CD4-positive, alpha-beta T cell (primary cell): ENCODE measurements at regions of chr11 and their contacts with region 1.

Region 1: GRCh38 chr11:14578541-14578956 is 58.4 kb upstream of the PSMA1 start:
- DNase-seq: peak; percentile 34 to 97 (median 62)
- ATAC-seq: peak; percentile 93
- H3K4me3 ChIP-seq: no peak overlapping the region
- H3K4me3 Mint-ChIP-seq: peak overlapping the region; percentile 23
- H3K27ac ChIP-seq: peak overlapping the region; percentile 77 to 79
- H3K27ac Mint-ChIP-seq: peak overlapping the region; percentile 85
- H3K4me1 ChIP-seq: peaks cover 38% of the 10 kb centered on the region
- H3K4me1 Mint-ChIP-seq: peaks cover 68% of the 10 kb centered on the region
- H3K27me3 ChIP-seq: no peaks in the 10 kb centered on the region
- H3K27me3 Mint-ChIP-seq: no peaks in the 10 kb centered on the region
- CTCF ChIP-seq: no peak

Region 2: DNA sequence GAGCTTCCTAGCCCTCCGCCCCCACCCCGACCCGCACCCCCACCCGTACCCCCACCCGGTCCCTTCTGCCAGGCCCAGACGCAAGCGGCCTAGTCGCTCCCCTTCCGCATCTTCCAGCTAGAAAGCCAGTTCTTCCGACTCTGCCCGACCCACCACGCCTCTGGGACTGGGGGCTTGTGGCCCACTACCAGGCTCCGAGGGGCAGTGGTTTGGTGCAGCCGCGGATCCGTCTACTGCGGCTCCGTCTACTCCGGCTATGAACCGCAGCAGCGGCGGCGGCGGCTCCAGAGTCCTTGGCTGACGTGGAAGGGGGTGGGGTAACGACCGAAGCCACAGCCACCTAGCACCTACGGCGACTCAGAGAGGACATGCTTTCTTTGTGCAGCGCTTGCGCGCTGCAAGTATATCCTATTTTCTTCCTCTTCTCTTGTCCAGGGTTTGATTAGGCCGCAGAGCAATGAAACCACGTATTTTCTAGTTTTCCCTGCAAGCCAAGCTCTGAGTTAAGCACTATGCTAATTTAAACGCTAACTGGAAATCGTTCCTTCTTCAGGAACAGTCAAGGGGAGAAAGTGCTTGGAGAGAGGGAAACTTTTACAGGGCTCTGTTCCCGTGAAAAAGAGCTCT is 78.9 kb before region 1 on chr11 and contains the start of gene COPB1:
- CTCF ChIA-PET with region 1: no interaction called
- POLR2A ChIA-PET with region 1: interaction called, 10 read pairs
- intact Hi-C with region 1: no loop called
- DNase-seq: peak; percentile 84 to 96 (median 90)
- ATAC-seq: peak; percentile 94
- H3K4me3 ChIP-seq: peak within 1 kb of the TSS; percentile 85
- H3K4me3 Mint-ChIP-seq: peak within 1 kb of the TSS; percentile 97
- H3K27ac ChIP-seq: peak within 1 kb of the TSS; percentile 67 to 84
- H3K27ac Mint-ChIP-seq: peak within 1 kb of the TSS; percentile 92
- H3K4me1 ChIP-seq: peaks cover 6% of the 10 kb centered on the region
- H3K4me1 Mint-ChIP-seq: peaks cover 53% of the 10 kb centered on the region
- H3K27me3 ChIP-seq: no peaks in the 10 kb centered on the region
- H3K27me3 Mint-ChIP-seq: no peaks in the 10 kb centered on the region
- CTCF ChIP-seq: no peak
- total RNA-seq, gene COPB1: 93.1 to 95.9 TPM

Region 3: DNA sequence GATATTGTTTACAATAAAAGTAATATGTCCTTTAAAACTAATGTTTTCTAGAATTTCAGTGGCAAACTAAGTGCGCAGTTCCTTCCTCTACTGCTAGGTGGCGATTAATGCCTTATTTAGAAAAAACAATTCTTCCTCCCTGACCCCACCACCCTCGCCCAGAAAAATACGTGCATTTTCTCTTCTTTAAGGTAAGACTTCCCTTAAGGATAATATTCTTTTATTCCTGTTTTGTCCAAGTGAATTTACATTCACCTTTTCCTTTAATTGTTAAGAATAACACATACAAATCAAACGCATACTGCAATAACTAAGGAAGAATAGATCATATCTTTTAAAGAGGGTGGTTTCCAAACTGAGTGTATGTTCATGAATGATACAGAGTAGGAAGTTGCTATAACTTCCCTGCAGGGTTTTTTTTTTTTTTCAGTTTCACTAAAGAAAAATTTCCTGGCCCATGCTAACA is 41.4 kb before region 1 on chr11:
- CTCF ChIA-PET with region 1: interaction called, 3 read pairs
- POLR2A ChIA-PET with region 1: interaction called, 10 read pairs
- intact Hi-C with region 1: loop called in 1 of 2 experiments (anchors 1 kb)
- DNase-seq: peak in 13 of 14 experiments; percentile 11 to 75 (median 37)
- ATAC-seq: peak; percentile 94
- H3K4me3 ChIP-seq: peak overlapping the region; percentile 7
- H3K4me3 Mint-ChIP-seq: peak overlapping the region; percentile 63
- H3K27ac ChIP-seq: no peak overlapping the region
- H3K27ac Mint-ChIP-seq: peak overlapping the region; percentile 63
- H3K4me1 ChIP-seq: peaks cover 7% of the 10 kb centered on the region
- H3K4me1 Mint-ChIP-seq: peaks cover 39% of the 10 kb centered on the region
- H3K27me3 ChIP-seq: no peaks in the 10 kb centered on the region
- H3K27me3 Mint-ChIP-seq: no peaks in the 10 kb centered on the region
- CTCF ChIP-seq: peak; percentile 96

Region 4: DNA sequence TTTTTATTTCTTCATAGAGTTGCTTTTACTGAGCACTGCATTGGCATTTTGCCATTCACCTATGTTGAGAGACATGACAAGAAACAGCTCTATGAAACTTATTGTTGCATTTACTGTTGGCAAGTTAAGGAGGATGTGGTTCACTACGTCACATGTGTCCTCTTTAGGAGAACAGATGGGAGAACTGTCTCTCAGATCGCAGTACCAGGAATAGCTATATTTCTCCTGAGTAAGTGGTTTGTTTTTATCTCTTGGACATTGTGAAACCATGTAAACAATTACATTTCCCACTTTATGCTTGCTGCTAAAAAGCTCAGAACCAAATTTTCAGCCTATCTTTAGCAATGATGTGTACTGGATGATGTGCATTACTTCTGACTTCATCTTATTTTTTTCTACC is 23.6 kb before region 1 on chr11:
- CTCF ChIA-PET with region 1: interaction called, 16 read pairs
- POLR2A ChIA-PET with region 1: interaction called, 60 read pairs
- intact Hi-C with region 1: loop called (anchors 1 to 2 kb)
- DNase-seq: peak in 8 of 14 experiments; percentile 7 to 89 (median 46)
- ATAC-seq: peak; percentile 90
- H3K4me3 ChIP-seq: no peak overlapping the region
- H3K4me3 Mint-ChIP-seq: peak overlapping the region; percentile 56
- H3K27ac ChIP-seq: peak overlapping the region; percentile 35 to 51
- H3K27ac Mint-ChIP-seq: peak overlapping the region; percentile 92
- H3K4me1 ChIP-seq: peaks cover 3% of the 10 kb centered on the region
- H3K4me1 Mint-ChIP-seq: peaks cover 47% of the 10 kb centered on the region
- H3K27me3 ChIP-seq: no peaks in the 10 kb centered on the region
- H3K27me3 Mint-ChIP-seq: no peaks in the 10 kb centered on the region
- CTCF ChIP-seq: no peak

Region 5: DNA sequence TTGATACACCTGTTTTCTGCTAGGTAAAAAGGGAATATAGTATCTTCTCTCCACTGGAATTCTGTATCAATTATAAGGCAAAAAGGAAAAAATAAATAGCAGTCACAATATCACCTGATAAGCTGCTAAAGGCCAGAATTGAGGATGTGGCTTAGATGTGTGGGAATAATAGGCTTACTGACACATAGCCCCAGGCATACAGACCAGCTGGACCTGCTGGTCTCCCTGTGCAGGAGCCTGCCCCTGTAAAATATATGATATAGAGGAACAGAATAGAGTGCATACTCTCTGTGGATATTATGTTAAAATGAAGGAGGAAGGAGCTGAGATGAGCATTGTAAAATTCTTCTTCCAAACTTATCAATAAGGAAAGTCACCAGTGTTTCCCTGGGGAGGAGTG is 28.2 kb after region 1 on chr11:
- CTCF ChIA-PET with region 1: no interaction called
- POLR2A ChIA-PET with region 1: interaction called, 11 read pairs
- intact Hi-C with region 1: no loop called
- DNase-seq: no peak
- ATAC-seq: no peak
- H3K4me3 ChIP-seq: no peak overlapping the region
- H3K4me3 Mint-ChIP-seq: no peak overlapping the region
- H3K27ac ChIP-seq: no peak overlapping the region
- H3K27ac Mint-ChIP-seq: no peak overlapping the region
- H3K4me1 ChIP-seq: no peaks in the 10 kb centered on the region
- H3K4me1 Mint-ChIP-seq: peaks cover 16% of the 10 kb centered on the region
- H3K27me3 ChIP-seq: no peaks in the 10 kb centered on the region
- H3K27me3 Mint-ChIP-seq: no peaks in the 10 kb centered on the region
- CTCF ChIP-seq: no peak

Region 6: DNA sequence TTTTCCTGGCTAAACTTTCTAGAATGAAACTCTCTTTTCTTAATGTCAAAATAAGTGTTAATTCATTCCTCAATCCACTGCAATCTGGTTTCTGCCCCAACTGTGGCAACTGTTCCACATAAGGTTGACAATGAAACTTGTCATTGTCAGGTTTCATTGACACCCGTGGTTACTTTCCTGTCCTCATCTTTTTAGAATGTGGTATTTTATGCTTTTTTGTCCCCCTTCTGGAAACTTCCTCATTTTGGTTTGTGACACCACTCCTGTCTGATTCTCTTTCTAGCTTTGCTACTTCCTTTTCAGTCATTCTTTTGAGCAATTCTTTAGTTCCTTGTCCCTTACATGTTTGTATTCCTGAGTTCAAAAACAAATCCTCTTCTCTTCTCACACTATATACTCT is 57.6 kb after region 1 on chr11:
- CTCF ChIA-PET with region 1: interaction called, 6 read pairs
- POLR2A ChIA-PET with region 1: interaction called, 37 read pairs
- intact Hi-C with region 1: loop called in 1 of 2 experiments (anchors 10 kb)
- DNase-seq: peak in 3 of 14 experiments; percentile 38 to 66 (median 39)
- ATAC-seq: peak; percentile 25
- H3K4me3 ChIP-seq: no peak overlapping the region
- H3K4me3 Mint-ChIP-seq: peak overlapping the region; percentile 26
- H3K27ac ChIP-seq: no peak overlapping the region
- H3K27ac Mint-ChIP-seq: peak overlapping the region; percentile 62
- H3K4me1 ChIP-seq: peaks cover 15% of the 10 kb centered on the region
- H3K4me1 Mint-ChIP-seq: peaks cover 72% of the 10 kb centered on the region
- H3K27me3 ChIP-seq: no peaks in the 10 kb centered on the region
- H3K27me3 Mint-ChIP-seq: no peaks in the 10 kb centered on the region
- CTCF ChIP-seq: no peak

Region 7: GRCh38 chr11:14892036-14892567 is 313.6 kb after region 1 on chr11 and contains the start of gene CYP2R1:
- CTCF ChIA-PET with region 1: no interaction called
- POLR2A ChIA-PET with region 1: interaction called, 13 read pairs
- intact Hi-C with region 1: no loop called
- DNase-seq: peak; percentile 79 to 95 (median 86)
- ATAC-seq: peak; percentile 82
- H3K4me3 ChIP-seq: peak within 1 kb of the TSS; percentile 94
- H3K4me3 Mint-ChIP-seq: peak within 1 kb of the TSS; percentile 96
- H3K27ac ChIP-seq: peak within 1 kb of the TSS; percentile 81 to 88
- H3K27ac Mint-ChIP-seq: peak within 1 kb of the TSS; percentile 94
- H3K4me1 ChIP-seq: peaks cover 31% of the 10 kb centered on the region
- H3K4me1 Mint-ChIP-seq: peaks cover 35% of the 10 kb centered on the region
- H3K27me3 ChIP-seq: no peaks in the 10 kb centered on the region
- H3K27me3 Mint-ChIP-seq: no peaks in the 10 kb centered on the region
- CTCF ChIP-seq: no peak
- total RNA-seq, gene CYP2R1: 14.2 to 15.8 TPM